ENCODE measurements at regions of chr13 and their contacts with region 1.

Region 1: DNA sequence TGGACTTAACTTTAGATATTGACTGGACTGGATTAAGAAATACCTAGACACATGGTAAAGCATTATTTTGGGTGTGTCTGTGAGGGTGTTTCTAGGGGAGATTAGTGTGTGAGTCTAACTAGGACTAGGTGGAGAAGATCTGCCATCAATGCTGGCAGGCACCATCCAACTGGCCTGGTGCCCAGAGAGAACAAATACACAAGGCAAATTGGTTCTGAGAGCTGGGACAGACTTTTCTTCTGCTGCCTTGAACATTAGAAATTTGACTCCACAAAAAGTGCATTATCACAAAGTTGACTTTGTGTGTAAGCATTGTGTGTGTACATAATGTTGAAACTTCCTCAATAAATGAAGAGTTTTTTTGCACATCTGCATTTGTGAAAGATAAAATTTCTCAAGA is 522.1 kb downstream of the SUCLA2 start:
- DNase-seq: no peak
- H3K4me3 ChIP-seq: no peak overlapping the region
- H3K27ac ChIP-seq: no peak overlapping the region
- H3K4me1 ChIP-seq: no peaks in the 10 kb centered on the region
- H3K27me3 ChIP-seq: no peaks in the 10 kb centered on the region
- CTCF ChIP-seq: no peak
- POLR2A ChIP-seq: no peak

Region 2: DNA sequence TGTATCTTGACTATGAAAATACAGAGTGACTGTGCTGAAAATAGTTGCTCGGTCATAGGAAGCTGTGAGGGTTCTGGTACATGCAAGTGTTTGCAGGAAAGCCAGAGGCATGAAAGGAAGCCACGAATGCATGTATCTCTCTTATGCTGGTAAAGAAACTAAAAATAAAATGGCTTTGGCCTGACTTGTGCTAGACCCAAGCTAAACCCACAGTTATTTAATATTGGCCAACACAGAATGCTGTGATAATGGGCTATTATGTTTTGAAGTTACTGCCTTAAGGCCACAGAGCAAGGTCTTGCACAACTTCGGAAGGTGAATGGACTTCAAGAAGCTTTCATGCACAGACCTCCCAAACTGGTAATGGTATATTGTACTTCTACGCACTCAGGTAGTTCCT is 63.9 kb before region 1 on chr13:
- intact Hi-C with region 1: loop called (anchors 10 kb)
- DNase-seq: no peak
- H3K4me3 ChIP-seq: no peak overlapping the region
- H3K27ac ChIP-seq: no peak overlapping the region
- H3K4me1 ChIP-seq: no peaks in the 10 kb centered on the region
- H3K27me3 ChIP-seq: no peaks in the 10 kb centered on the region
- CTCF ChIP-seq: no peak
- POLR2A ChIP-seq: no peak

Measured in spleen (tissue), 13 donors.